HEK293 (cell line): ENCODE measurements at regions of chr11 and their contacts with region 1.

Region 1: GRCh38 chr11:65652511-65653231 is 10.0 kb downstream of the RELA start:
- H3K4me3 ChIP-seq: peak overlapping the region; percentile 46
- H3K27ac ChIP-seq: peak overlapping the region; percentile 54
- H3K4me1 ChIP-seq: peaks cover 8% of the 10 kb centered on the region
- CTCF ChIP-seq: no peak

Region 2: GRCh38 chr11:65662799-65663638 is 10.3 kb after region 1 on chr11 and contains the start of gene RELA:
- CTCF ChIA-PET with region 1: interaction called, 6 read pairs
- POLR2A ChIA-PET with region 1: interaction called, 34 read pairs
- H3K4me3 ChIP-seq: peak within 1 kb of the TSS; percentile 82
- H3K27ac ChIP-seq: peak within 1 kb of the TSS; percentile 93
- H3K4me1 ChIP-seq: no peaks in the 10 kb centered on the region
- CTCF ChIP-seq: no peak